Colonic mucosa (tissue), 4 donors: ENCODE measurements at regions of chr3 and their contacts with region 1.

Region 1: DNA sequence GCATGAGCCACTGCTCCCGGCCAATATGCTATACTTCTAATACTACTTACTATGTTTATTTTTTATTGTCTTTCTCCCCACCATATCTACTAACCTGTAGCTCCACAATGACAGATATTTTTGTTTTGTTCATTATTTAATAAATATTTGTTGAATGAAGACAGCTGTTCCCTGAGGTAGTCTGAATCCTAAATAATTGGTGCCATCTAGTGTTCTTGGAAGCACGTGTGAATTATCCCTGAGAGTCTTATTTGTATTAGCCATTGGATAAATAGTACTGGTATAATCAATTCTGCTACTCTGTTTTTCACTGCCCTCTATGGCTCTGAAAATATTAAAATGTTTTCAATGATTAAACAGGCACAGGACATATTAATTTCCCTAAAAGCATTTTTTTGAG is 5.6 kb upstream of the APPL1 start:
- DNase-seq: no peak
- H3K4me3 ChIP-seq: no peak overlapping the region
- H3K27ac ChIP-seq: no peak overlapping the region
- H3K4me1 ChIP-seq: no peaks in the 10 kb centered on the region
- H3K27me3 ChIP-seq: no peaks in the 10 kb centered on the region
- CTCF ChIP-seq: no peak

Region 2: GRCh38 chr3:56536735-56537134 is 685.1 kb before region 1 on chr3:
- intact Hi-C with region 1: no loop called
- DNase-seq: no peak
- H3K4me3 ChIP-seq: no peak overlapping the region
- H3K27ac ChIP-seq: no peak overlapping the region
- H3K4me1 ChIP-seq: no peaks in the 10 kb centered on the region
- H3K27me3 ChIP-seq: no peaks in the 10 kb centered on the region
- CTCF ChIP-seq: no peak

Region 3: GRCh38 chr3:57100046-57100695 is 121.7 kb before region 1 on chr3:
- intact Hi-C with region 1: loop called (anchors 5 kb)
- DNase-seq: peak; percentile 83
- H3K4me3 ChIP-seq: no peak overlapping the region
- H3K27ac ChIP-seq: no peak overlapping the region
- H3K4me1 ChIP-seq: no peaks in the 10 kb centered on the region
- H3K27me3 ChIP-seq: no peaks in the 10 kb centered on the region
- CTCF ChIP-seq: peak; percentile 89

Region 4: DNA sequence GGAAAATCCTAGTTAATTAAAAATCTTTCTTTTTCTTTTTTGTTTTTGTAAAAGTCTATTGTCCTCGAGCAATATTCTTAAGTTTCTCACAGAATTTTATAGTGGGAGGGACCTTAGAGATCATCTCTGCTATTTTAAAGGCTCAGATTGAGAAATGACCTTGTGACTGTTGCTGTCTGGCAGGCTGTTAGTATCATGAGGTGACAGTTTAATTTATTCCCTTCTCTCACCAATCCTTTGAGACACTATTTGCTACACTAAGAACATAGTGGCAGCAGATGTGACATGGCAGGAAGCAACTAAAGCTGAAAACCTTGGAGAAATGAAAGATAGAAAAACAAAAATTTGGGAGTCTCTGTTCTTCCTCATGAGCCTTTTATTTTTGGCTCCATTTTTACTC is 30.5 kb after region 1 on chr3:
- intact Hi-C with region 1: no loop called
- DNase-seq: no peak
- H3K4me3 ChIP-seq: no peak overlapping the region
- H3K27ac ChIP-seq: no peak overlapping the region
- H3K4me1 ChIP-seq: no peaks in the 10 kb centered on the region
- H3K27me3 ChIP-seq: no peaks in the 10 kb centered on the region
- CTCF ChIP-seq: no peak